ENCODE measurements at regions of chr16 and their contacts with region 1.

Region 1: GRCh38 chr16:55465077-55465896 is 13.7 kb upstream of the MMP2 start:
- DNase-seq: peak; percentile 80
- H3K4me3 Mint-ChIP-seq: no peak overlapping the region
- H3K27ac Mint-ChIP-seq: no peak overlapping the region
- H3K4me1 Mint-ChIP-seq: peaks cover 3% of the 10 kb centered on the region
- H3K27me3 Mint-ChIP-seq: no peaks in the 10 kb centered on the region
- CTCF ChIP-seq: peak; percentile 100

Region 2: DNA sequence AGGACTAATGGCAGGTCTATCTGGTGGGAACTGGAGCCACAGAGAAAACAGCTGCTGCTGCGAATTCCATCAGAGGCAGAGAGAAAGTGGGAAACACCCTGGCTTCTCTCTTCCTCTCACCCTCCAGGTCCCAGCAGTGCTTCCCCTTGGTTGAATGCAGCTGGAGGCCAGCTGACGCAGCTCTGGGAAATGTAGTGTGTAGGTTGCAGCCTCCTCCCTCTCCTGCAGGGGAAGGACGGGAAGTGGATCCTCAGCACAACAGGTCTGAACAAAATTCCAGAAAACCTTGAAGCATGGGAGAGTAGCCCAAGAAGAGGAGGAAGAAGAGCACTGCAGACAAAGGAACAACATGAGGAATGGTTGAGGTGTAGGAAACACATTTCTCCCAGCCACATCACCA is 54.1 kb before region 1 on chr16:
- CTCF ChIA-PET with region 1: no interaction called
- POLR2A ChIA-PET with region 1: no interaction called
- intact Hi-C with region 1: no loop called
- DNase-seq: no peak
- H3K4me3 Mint-ChIP-seq: no peak overlapping the region
- H3K27ac Mint-ChIP-seq: no peak overlapping the region
- H3K4me1 Mint-ChIP-seq: peaks cover 9% of the 10 kb centered on the region
- H3K27me3 Mint-ChIP-seq: peaks cover 41% of the 10 kb centered on the region
- CTCF ChIP-seq: no peak

Region 3: DNA sequence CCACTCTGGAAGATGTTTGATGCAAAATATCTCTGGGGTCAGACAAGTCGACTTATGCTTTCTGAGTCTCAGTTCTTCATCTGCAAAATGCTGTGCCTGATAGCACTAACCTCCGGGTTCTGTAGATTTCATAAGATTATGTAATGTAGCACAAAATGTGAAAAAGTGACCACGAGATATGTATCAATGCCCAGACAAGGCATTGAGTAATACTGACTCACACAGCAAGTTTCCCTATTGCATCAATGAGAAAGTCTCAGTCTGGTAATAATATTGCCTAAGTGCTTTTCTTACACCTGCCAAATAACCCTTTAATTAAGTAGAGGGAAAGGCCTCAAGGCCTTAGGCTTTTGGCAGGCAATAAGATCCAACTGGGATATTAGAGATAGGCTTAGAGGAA is 27.7 kb before region 1 on chr16:
- CTCF ChIA-PET with region 1: interaction called, 15 read pairs
- POLR2A ChIA-PET with region 1: interaction called, 3 read pairs
- intact Hi-C with region 1: no loop called
- DNase-seq: peak; percentile 95
- H3K4me3 Mint-ChIP-seq: no peak overlapping the region
- H3K27ac Mint-ChIP-seq: no peak overlapping the region
- H3K4me1 Mint-ChIP-seq: peaks cover 29% of the 10 kb centered on the region
- H3K27me3 Mint-ChIP-seq: peaks cover 30% of the 10 kb centered on the region
- CTCF ChIP-seq: no peak

Region 4: DNA sequence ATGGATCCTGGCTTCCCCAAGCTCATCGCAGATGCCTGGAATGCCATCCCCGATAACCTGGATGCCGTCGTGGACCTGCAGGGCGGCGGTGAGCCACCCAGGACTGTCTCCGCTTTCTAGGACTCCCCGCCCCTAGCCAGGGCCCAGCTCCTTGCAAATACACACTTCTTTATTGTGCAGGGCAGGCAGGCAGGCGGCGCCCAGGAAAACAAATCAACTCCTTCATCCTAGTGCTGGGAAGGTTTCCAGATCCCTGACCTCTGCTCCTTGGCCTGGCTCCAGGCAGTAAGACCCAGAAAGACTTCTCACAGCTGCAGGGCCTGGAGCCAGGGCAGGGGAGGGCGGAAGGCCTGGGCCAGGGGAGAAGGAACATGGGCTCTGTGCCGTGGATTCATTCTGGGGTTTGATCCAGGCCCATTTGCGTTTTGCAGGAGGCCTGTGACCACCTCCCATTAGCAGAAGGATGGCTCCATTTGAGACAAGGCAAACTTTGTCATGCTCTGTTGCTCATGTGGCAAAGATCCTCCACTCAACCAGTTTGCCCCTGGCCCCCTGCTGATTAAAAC is 37.6 kb after region 1 on chr16:
- CTCF ChIA-PET with region 1: interaction called, 35 read pairs
- POLR2A ChIA-PET with region 1: interaction called, 6 read pairs
- intact Hi-C with region 1: no loop called
- DNase-seq: peak; percentile 93
- H3K4me3 Mint-ChIP-seq: no peak overlapping the region
- H3K27ac Mint-ChIP-seq: no peak overlapping the region
- H3K4me1 Mint-ChIP-seq: peaks cover 26% of the 10 kb centered on the region
- H3K27me3 Mint-ChIP-seq: no peaks in the 10 kb centered on the region
- CTCF ChIP-seq: no peak

Region 5: GRCh38 chr16:55559233-55559632 is 93.9 kb after region 1 on chr16:
- CTCF ChIA-PET with region 1: interaction called, 22 read pairs
- POLR2A ChIA-PET with region 1: no interaction called
- intact Hi-C with region 1: no loop called
- DNase-seq: peak; percentile 69
- H3K4me3 Mint-ChIP-seq: peak overlapping the region; percentile 22
- H3K27ac Mint-ChIP-seq: peak overlapping the region; percentile 32
- H3K4me1 Mint-ChIP-seq: peaks cover 65% of the 10 kb centered on the region
- H3K27me3 Mint-ChIP-seq: no peaks in the 10 kb centered on the region
- CTCF ChIP-seq: no peak

Region 6: DNA sequence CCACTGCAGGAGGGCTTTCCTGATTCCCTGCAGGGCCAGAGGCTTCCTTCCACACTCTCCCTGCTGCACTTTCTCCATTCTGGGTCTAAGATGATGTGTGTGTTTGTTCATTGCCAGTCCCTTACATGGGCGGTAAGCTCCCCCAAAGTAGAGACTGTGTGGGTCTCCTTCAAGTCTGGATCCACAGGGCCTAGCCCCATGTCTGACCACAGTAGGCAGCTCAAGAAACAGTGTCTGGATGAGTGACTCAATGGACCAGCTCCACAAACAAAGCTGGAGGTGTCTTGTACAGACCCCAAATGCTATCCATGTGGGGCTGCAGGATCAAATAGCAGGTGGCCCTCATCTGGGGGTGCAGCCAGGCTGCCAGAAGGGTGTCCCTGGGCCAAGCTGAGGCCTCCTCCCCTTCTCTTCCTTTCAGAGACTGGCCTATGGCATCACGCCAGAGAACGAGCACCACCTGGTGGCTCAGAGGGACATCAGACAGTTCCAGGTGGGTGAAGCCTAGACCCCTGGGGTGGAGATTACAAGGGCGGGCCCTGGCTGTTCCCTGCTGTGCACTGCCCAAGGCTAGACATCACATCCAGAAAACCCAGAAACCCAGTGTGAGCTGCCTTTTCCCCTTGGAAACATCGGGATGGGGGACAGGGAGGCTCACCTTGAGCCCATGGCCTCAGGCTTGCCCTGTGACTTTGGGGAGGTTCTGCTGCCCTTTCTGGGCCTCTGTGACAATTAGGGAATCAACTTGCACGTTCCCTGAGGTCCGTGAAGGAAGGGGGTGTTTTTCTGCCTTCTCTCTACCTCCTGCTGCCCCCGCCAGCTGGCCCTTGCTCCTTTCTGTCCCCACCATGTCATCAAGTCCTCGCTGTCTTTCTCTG is 236.4 kb after region 1 on chr16:
- CTCF ChIA-PET with region 1: interaction called, 619 read pairs
- POLR2A ChIA-PET with region 1: interaction called, 6 read pairs
- intact Hi-C with region 1: loop called (anchors 1 kb)
- DNase-seq: peak; percentile 70
- H3K4me3 Mint-ChIP-seq: no peak overlapping the region
- H3K27ac Mint-ChIP-seq: no peak overlapping the region
- H3K4me1 Mint-ChIP-seq: no peaks in the 10 kb centered on the region
- H3K27me3 Mint-ChIP-seq: peaks cover 14% of the 10 kb centered on the region
- CTCF ChIP-seq: peak; percentile 65

Measured in MCF 10A (cell line).